OCI-LY7 (cell line): ENCODE measurements at regions of chr17 and their contacts with region 1.

Region 1: GRCh38 chr17:17356149-17356930 is 53.2 kb downstream of the NT5M start:
- DNase-seq: peak; percentile 82
- H3K4me3 ChIP-seq: no peak overlapping the region
- H3K27ac ChIP-seq: no peak overlapping the region
- H3K4me1 ChIP-seq: no peaks in the 10 kb centered on the region
- CTCF ChIP-seq: peak; percentile 100

Region 2: GRCh38 chr17:17401271-17401781 is 45.0 kb after region 1 on chr17:
- CTCF ChIA-PET with region 1: no interaction called
- POLR2A ChIA-PET with region 1: no interaction called
- intact Hi-C with region 1: loop called (anchors 5 kb)
- DNase-seq: peak; percentile 33
- H3K4me3 ChIP-seq: no peak overlapping the region
- H3K27ac ChIP-seq: no peak overlapping the region
- H3K4me1 ChIP-seq: peaks cover 36% of the 10 kb centered on the region
- CTCF ChIP-seq: peak; percentile 61

Region 3: GRCh38 chr17:17496189-17497064 is 140.1 kb after region 1 on chr17 and contains the start of gene RASD1:
- CTCF ChIA-PET with region 1: no interaction called
- POLR2A ChIA-PET with region 1: interaction called, 3 read pairs
- intact Hi-C with region 1: loop called (anchors 1 kb)
- DNase-seq: peak; percentile 75
- H3K4me3 ChIP-seq: peak within 1 kb of the TSS; percentile 41
- H3K27ac ChIP-seq: no peak within 1 kb of the TSS
- H3K4me1 ChIP-seq: peaks cover 10% of the 10 kb centered on the region
- CTCF ChIP-seq: peak; percentile 83
- total RNA-seq, gene RASD1: 0.08 and 0.19 TPM in 2 replicates

Region 4: GRCh38 chr17:17568749-17569195 is 212.4 kb after region 1 on chr17:
- CTCF ChIA-PET with region 1: no interaction called
- POLR2A ChIA-PET with region 1: no interaction called
- intact Hi-C with region 1: loop called (anchors 5 kb)
- DNase-seq: peak; percentile 52
- H3K4me3 ChIP-seq: no peak overlapping the region
- H3K27ac ChIP-seq: no peak overlapping the region
- H3K4me1 ChIP-seq: no peaks in the 10 kb centered on the region
- CTCF ChIP-seq: peak; percentile 85

Region 5: GRCh38 chr17:17641621-17642409 is 285.5 kb after region 1 on chr17:
- CTCF ChIA-PET with region 1: interaction called, 4 read pairs
- POLR2A ChIA-PET with region 1: no interaction called
- intact Hi-C with region 1: loop called (anchors 1 kb)
- DNase-seq: peak; percentile 82
- H3K4me3 ChIP-seq: no peak overlapping the region
- H3K27ac ChIP-seq: no peak overlapping the region
- H3K4me1 ChIP-seq: no peaks in the 10 kb centered on the region
- CTCF ChIP-seq: peak; percentile 96